ENCODE measurements at regions of chr3 and their contacts with region 1.

Region 1: DNA sequence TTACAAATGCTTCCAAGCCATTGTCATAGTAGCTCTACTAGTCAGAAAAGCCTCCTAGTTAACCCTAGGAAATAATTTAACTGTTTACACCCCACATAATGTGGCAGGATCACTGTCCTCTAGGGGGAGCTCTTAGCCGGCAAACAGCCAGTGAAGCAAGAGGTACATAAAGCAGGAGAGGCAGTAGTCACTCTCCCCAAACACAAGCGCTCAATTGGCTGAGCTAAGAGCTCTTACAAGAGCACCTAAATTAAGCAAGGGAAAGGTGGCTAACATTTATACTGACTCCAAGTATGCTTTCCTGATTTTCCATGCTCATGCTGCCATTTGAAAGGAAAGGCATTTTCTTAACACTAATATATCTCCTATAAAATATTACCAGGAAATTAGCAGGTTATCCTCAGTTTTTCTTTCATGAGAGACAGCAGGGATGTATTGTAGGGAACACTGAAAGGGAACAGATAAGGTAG is 37.6 kb downstream of the NCEH1 start:
- DNase-seq: peak; percentile 50
- CTCF ChIP-seq: peak; percentile 81

Region 2: DNA sequence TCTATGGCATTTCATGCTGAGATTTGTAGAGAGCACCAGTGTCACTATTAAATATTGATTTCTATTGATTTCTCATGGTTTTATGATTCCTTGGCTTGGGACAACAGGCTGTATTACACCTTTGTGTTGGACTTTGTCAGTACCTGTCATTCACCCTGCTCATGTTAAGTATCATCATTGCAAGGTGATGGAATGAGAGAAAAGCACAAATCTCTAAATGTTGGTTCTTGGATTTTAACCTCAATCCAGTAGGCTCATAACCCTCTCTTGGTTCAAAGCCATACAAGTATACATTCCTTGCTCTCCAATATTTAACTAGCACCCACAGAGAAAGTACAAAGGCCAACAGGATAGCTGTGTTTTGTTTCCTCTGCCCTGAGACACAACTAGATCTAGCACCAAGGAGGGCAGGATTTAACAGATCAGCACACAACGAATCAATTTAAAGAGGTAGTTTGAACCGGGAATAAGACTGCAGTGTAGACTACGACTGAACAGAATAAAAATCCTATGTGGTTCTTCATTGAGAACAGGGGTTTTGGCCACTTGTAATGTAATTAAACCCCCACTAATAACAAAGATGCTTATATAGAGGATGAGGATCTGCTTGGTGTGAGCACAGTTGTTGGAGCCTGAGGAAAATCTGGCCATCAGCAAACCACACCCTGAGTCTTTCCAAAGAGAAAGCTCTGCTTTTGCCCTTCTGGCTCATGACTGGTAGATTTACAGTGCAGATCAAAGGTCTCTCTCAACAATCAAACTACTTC is 72.0 kb before region 1 on chr3:
- CTCF ChIA-PET with region 1: interaction called, 11 read pairs
- POLR2A ChIA-PET with region 1: no interaction called
- DNase-seq: no peak
- CTCF ChIP-seq: no peak

Region 3: DNA sequence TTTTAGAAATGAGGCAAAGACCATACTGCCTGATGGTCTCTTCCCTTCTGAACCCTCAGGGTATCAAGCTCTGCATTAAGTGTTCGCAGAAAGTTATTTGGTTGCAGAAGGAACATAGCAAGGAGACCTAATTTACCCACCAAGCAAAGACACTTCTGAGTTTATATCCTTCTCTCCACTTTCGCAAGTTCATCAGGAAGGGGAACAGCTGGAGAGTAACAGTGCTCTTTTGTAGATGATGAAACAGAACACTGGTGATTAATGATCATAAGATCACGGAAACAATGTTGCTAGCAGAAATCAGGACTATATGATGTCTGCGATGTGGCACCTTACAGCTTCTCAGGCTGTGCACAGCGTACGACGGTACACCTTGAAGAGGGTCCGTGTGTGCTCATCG is 24.5 kb before region 1 on chr3:
- CTCF ChIA-PET with region 1: interaction called, 10 read pairs
- POLR2A ChIA-PET with region 1: no interaction called
- DNase-seq: no peak
- CTCF ChIP-seq: no peak

Region 4: DNA sequence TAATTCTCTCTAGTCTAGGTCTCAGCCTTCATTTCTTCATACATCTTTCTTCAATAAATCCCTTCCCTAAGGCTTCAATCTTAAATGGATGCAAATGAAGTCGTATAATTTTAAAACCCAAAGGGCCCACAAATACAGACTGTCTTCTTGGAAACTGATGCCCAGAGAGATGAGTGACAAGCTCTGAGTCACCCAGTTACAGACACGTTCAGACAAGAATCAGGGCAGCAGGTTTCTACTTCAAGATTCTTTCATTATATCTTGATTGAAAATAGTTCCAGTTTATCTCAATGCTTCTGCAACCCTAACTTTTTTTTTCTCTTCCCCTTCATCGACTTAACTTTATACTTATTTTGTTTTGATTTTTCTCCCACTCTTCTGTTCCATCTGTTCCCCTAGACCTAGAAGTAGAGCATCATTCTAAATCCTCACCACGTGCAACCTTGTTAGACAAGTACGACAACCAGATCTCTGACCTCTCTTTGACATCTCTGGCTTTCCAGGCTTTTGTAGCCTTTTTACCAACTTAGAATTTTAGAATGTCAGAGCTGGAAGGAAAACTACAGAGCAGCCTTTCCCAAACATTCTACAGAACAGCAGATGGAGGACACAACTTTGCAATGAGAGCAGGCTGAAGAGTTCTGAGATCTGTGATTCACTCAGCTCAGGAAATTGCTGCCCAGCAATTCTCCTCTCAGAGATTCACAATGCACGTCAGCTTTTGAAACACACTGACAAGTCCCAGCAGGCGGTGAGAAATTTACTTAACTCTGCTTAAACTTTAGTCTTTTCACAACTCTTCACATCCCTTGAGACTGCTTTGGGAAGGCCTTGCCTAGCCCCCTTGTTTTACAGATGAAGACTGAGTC is 12.3 kb after region 1 on chr3:
- CTCF ChIA-PET with region 1: interaction called, 49 read pairs
- POLR2A ChIA-PET with region 1: no interaction called
- DNase-seq: no peak
- CTCF ChIP-seq: no peak

Region 5: DNA sequence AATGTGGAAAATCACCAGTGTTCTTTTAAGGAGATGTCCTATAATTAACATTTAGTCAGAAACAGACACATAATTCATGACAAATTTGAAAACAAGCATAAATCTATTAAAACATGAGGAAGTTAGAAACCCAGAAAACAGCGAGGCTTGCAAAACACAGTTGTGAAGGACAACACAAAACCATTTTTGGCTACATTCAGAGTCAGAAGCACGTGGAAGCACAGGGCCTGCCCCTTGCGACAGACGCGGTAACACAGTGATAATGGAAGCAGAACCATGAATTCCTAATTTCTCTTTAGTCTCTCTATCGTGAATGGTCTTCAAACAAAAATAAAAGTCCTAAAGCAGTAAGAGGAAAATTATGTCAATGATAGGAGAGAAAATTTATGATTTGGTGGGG is 25.4 kb after region 1 on chr3:
- CTCF ChIA-PET with region 1: interaction called, 28 read pairs
- POLR2A ChIA-PET with region 1: no interaction called
- DNase-seq: no peak
- CTCF ChIP-seq: no peak

Measured in GM10248 (cell line).